Left ventricle myocardium superior (tissue), 1 donor: ENCODE measurements at regions of chr7 and their contacts with region 1.

Region 1: DNA sequence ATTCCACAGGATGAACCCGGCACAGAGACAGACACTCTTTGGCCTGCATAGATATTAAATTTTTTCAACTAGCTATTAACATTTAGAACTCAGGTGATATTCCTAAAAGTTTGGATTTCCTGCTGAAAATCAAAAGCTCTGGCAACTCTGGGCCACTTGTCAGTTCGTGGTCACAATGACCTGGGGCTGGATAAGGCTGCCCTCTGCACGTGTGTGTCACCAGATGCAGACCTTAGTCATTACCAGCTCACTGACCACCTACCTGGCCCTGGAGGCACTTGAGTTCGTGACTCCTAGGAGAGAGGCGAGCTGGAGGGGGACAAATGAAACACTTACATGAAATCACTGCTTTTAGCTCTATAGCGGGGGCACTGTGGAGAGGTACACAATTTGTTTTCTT is 126.5 kb downstream of the HIPK2 start:
- DNase-seq: no peak
- ATAC-seq: peak; percentile 14

Region 2: DNA sequence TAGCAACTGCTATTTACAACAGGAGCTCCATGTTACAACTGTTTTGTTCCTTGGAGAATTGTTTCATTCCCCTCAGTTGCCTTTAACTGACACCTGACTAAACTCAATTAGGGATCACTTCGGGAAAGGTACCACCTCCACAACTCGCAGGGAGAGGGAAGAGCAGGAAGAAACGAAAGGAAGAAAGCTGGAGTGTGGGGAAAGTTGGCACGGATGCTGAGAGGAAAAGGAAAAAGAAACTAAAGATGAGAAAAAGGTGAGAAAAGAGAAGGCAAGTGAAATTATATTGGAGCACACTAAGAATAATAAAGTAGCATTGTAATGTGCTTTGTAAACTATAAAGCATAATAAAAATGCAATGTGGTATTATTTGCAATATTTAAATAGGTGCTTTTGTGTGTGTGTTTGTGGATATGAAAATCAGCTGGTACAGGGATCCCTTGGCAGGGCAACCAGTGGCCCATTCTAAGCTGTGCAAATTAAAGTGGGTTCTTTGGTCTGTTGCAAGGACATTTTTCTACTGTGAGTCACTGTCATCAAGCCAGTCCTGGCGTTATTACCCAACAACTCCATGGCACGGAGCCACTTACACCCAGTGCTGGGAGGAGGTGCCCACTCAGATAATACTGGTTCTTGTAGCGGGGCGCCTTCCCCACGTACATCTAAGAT is 80.6 kb after region 1 on chr7:
- intact Hi-C with region 1: loop called (anchors 10 kb)
- DNase-seq: peak; percentile 86
- ATAC-seq: peak; percentile 71

Region 3: DNA sequence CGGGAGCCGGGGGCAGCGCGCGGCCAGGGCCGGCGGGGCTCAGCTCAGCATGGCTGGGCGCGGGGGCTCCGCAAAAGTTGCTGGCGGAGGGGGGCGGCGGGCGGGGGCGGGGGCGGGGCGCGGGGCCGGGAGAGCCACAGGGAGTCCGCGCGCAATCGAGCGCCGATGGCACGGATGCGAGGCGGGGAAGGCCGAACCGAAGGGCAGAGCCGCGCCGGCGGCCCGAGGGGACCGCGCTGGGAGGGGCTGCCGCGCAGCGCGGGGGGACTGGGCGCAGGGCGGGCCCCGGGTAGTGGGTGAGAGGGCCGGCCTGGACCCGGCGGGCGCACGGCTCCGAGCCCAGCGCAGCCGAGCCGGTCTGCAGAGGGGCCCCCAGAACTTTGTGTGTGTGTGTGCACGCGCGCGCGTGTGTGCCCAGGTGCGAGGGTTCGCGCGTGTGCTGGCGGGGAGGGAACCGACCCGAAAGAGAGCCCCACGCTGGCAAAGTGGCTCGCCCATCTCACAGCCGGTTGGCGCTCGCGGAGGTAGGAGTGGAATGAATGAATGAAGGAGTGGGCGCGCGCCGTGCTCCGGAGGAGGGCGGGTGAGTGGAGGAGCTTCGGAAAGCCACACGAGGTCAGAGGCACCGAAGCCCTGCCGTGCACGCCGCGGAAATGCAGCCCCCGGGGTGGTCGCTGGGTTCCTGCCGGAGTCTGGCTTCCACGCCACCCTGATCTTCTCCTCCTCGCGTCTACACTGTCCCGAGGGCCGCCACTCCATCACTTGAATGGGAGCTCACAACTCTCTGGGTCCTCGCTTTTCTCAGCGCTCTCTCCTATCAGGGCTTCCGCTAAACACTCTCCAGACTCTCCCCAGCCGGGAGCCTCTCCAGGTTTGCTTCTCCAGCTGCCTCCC is 126.9 kb after region 1 on chr7 and contains the start of gene HIPK2:
- intact Hi-C with region 1: loop called (anchors 10 kb)
- DNase-seq: peak; percentile 90
- ATAC-seq: peak; percentile 85
- total RNA-seq, gene HIPK2: 103 TPM

Region 4: GRCh38 chr7:140525743-140526142 is 874.4 kb after region 1 on chr7:
- intact Hi-C with region 1: no loop called
- DNase-seq: no peak
- ATAC-seq: no peak